ENCODE measurements at regions of chr6 and their contacts with region 1.

Region 1: GRCh38 chr6:96897383-96898240 is at the start of gene NDUFAF4:
- DNase-seq: peak; percentile 91 to 95 (median 94)
- H3K4me3 ChIP-seq: peak within 1 kb of the TSS; percentile 69 to 98 (median 90)
- H3K27ac ChIP-seq: peak within 1 kb of the TSS; percentile 71 to 97 (median 92)
- H3K27me3 ChIP-seq: no peaks in the 10 kb centered on the region
- CTCF ChIP-seq: peak; percentile 75 to 100 (median 95)
- total RNA-seq, gene NDUFAF4: 23.6 to 75.9 (median 49.9) TPM

Region 2: DNA sequence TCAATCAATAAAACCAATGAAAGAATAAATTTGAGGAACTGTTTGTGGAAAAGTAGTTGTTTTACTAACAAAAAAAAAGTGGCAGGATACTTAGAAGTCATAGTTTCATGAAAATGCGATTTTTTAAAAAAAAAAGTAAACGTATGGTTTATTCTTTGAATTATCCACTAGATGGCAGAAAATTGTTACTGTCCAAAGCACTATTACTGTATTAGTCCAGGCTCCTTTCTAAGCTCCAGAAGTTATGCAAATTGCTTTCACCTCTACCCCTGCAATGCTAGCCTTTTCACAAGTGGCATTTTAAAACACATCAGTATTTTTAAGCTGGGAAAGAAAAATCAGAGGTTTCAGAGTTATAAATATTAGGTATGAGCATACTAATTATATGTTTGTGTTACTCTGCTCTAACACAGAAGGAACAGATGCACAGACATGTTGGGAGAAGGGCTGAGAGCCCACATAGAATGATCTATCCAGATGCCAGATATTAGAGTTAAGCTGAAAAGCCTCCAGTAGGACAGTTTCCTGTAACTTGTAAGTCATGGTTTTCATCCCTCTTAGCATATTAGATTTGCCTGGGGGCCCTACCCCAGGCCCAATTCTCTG is 270.8 kb before region 1 on chr6:
- intact Hi-C with region 1: loop called (anchors 2 to 10 kb)
- DNase-seq: no peak
- H3K4me3 ChIP-seq: no peak overlapping the region
- H3K27ac ChIP-seq: no peak overlapping the region
- H3K27me3 ChIP-seq: no peaks in the 10 kb centered on the region
- CTCF ChIP-seq: peak; percentile 22 to 77 (median 56)

Region 3: GRCh38 chr6:96837081-96837971 is 60.3 kb before region 1 on chr6 and contains the start of gene GPR63:
- intact Hi-C with region 1: loop called in 1 of 2 experiments (anchors 1 kb)
- DNase-seq: peak; percentile 38 to 83 (median 65)
- H3K4me3 ChIP-seq: peak within 1 kb of the TSS; percentile 57 to 93 (median 84)
- H3K27ac ChIP-seq: peak within 1 kb of the TSS in 49 of 59 donors; percentile 1 to 81 (median 56)
- H3K27me3 ChIP-seq: no peaks in the 10 kb centered on the region
- CTCF ChIP-seq: peak in 3 of 56 donors; percentile 9 to 10 (median 10)
- total RNA-seq, gene GPR63: 3.6 to 17.2 (median 10.1) TPM

Region 4: GRCh38 chr6:97053643-97054411 is 156.2 kb after region 1 on chr6:
- intact Hi-C with region 1: loop called (anchors 2 kb)
- DNase-seq: no peak
- H3K4me3 ChIP-seq: peak overlapping the region in 1 of 59 donors; percentile 15
- H3K27ac ChIP-seq: peak overlapping the region in 56 of 59 donors; percentile 0 to 98 (median 92)
- H3K27me3 ChIP-seq: no peaks in the 10 kb centered on the region
- CTCF ChIP-seq: peak; percentile 63 to 90 (median 80)

Region 5: DNA sequence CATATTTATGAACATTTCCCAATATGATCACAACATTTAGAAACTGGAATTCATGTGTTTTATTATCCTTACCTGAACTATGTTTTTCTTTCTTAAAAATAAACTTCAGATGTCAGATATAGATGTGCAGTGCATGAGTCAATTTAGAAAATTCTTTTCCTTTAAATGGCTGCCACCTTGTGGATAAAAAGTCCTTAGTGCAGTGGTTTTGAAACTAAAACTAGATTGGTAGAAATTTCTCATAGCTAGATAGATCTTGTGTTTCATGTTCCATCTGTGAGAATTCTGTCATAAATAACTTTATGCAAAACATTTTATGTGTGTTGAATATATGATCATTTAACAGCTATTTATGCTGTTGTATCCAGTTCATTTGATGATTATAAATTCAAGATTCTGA is 161.9 kb after region 1 on chr6:
- intact Hi-C with region 1: loop called in 1 of 2 experiments (anchors 2 kb)
- DNase-seq: no peak
- H3K4me3 ChIP-seq: no peak overlapping the region
- H3K27ac ChIP-seq: peak overlapping the region in 42 of 59 donors; percentile 2 to 86 (median 63)
- H3K27me3 ChIP-seq: no peaks in the 10 kb centered on the region
- CTCF ChIP-seq: peak; percentile 52 to 92 (median 74)

Measured in dorsolateral prefrontal cortex (tissue), 120 donors.